A673 (cell line): ENCODE measurements at regions of chr7 and their contacts with region 1.

Region 1: DNA sequence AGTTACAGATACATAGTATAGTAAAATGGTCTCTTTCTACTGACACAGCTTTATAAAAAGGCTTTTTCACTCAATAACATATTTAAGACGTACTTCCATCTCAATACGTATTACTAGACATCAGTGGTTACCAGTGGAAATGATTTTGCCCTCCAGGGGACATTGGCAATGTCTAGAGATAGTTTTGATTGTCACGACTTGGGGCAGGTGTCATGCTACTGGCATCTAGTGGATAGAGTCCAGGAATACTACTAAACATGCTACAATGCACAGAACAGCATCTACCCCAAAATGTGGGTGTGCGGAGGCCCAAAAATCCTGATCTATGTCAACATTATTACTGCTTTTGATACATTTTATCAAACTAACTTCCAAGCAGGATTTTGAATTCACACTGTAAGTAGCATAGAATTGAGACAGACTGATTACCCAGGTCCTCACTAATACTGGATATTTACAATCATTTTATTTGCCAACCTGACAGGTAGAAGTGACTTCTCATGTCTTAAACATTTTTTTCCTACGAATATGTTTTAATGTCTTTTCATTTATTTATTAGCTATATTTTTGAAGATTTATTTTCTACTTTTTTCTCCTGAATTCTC is 53.8 kb downstream of the HGF start:
- DNase-seq: peak; percentile 77
- H3K4me3 ChIP-seq: no peak overlapping the region
- H3K27ac ChIP-seq: no peak overlapping the region
- H3K4me1 ChIP-seq: peaks cover 6% of the 10 kb centered on the region
- H3K27me3 ChIP-seq: no peaks in the 10 kb centered on the region
- CTCF ChIP-seq: peak; percentile 62

Region 2: GRCh38 chr7:81256991-81257390 is 459.1 kb before region 1 on chr7:
- CTCF ChIA-PET with region 1: no interaction called
- POLR2A ChIA-PET with region 1: no interaction called
- intact Hi-C with region 1: no loop called
- DNase-seq: peak; percentile 56
- H3K4me3 ChIP-seq: no peak overlapping the region
- H3K27ac ChIP-seq: no peak overlapping the region
- H3K4me1 ChIP-seq: no peaks in the 10 kb centered on the region
- H3K27me3 ChIP-seq: no peaks in the 10 kb centered on the region
- CTCF ChIP-seq: peak; percentile 55

Region 3: DNA sequence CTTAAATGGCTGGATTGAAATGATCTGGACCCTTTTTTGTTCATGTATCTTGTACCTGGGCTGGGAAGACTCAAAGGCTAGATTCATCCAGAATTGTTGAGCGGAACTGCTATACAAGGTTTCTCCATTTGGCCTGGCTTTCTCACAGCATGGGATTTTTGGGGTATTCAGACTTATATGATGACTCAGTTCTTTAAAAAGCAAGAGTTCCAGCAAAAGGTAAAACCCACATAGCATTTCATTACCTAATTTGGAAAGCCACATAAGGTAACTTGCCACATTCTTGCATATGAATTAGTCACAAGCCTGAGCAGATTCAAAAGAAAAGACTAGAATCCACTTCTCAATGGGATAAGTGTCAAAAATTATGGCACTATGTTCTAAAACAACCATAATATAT is 83.7 kb before region 1 on chr7:
- CTCF ChIA-PET with region 1: no interaction called
- POLR2A ChIA-PET with region 1: no interaction called
- intact Hi-C with region 1: no loop called
- DNase-seq: peak; percentile 3
- H3K4me3 ChIP-seq: no peak overlapping the region
- H3K27ac ChIP-seq: no peak overlapping the region
- H3K4me1 ChIP-seq: peaks cover 6% of the 10 kb centered on the region
- H3K27me3 ChIP-seq: no peaks in the 10 kb centered on the region
- CTCF ChIP-seq: no peak

Region 4: DNA sequence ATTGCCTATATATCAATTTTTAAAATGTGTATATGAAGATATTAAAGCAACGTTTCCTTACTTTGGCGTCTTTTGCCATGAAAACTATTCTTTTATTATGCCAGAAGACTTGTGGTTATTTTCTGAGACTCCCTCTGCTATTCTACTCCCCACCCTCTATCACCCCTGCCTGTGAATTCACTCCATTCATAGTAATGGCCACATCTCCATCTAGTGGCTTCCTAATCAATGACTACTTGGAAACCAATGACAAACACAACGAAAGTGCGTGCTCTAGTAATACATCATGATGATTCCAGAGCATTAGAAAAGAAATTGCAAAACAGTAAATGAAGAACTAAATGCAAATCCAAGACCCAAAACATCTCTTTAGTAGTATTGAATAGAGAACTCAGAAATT is 240.4 kb after region 1 on chr7:
- CTCF ChIA-PET with region 1: no interaction called
- POLR2A ChIA-PET with region 1: no interaction called
- intact Hi-C with region 1: loop called (anchors 5 kb)
- DNase-seq: peak; percentile 70
- H3K4me3 ChIP-seq: no peak overlapping the region
- H3K27ac ChIP-seq: no peak overlapping the region
- H3K4me1 ChIP-seq: peaks cover 6% of the 10 kb centered on the region
- H3K27me3 ChIP-seq: no peaks in the 10 kb centered on the region
- CTCF ChIP-seq: peak; percentile 68

Region 5: DNA sequence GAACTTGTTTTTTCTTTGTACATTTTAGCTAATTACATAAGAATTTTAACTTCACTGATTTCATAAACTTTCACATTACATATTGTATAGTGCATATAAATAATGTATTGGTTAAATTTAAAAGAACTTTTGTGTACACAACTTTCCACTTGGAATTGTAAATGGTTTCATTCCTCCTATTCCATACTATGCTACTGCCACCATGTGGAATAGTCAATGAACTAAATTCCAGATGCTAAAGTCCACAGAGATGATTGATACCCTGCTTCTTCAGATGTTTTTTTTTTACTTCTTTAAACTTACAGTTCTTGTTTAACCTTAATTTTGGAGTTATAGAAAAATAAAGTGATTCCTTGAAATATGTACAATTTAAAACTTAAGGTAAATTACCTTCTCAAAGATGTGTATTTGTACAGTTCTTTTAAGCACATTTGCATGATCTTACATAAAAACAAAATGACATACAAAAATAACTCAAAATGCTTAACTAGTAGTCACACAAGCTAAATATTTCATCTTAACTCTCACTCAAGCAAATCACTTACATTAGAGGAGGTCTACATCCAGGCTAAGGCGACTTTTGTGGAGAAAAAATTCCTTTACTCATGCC is 301.4 kb after region 1 on chr7:
- CTCF ChIA-PET with region 1: no interaction called
- POLR2A ChIA-PET with region 1: no interaction called
- intact Hi-C with region 1: loop called (anchors 10 kb)
- DNase-seq: peak; percentile 43
- H3K4me3 ChIP-seq: no peak overlapping the region
- H3K27ac ChIP-seq: no peak overlapping the region
- H3K4me1 ChIP-seq: no peaks in the 10 kb centered on the region
- H3K27me3 ChIP-seq: no peaks in the 10 kb centered on the region
- CTCF ChIP-seq: peak; percentile 69